Cardiac septum (tissue), 1 donor: ENCODE measurements at regions of chr22 and their contacts with region 1.

Region 1: DNA sequence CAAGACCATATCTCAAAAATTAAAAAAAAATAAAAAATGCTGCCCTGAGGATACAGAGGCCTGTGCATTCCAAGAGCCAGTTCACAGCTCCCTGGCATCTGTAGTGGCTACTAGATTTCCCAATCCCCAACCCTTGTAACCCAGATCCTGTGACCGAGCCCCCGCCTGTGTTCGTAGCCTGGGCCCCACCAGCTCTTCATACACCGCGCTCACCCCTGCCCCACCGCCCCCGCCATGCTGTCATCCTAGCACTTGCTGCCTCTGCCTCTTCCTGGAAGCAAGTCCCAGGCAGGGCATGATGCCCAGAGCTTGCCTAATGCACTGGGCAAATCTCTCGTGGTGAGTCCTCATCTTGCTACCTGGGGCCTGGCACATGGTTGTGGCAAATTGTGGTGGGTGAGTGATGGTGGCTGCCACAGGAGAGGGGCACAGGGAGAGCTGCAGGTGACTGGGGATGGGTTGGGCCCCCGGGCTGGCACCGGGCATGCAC is 7.1 kb downstream of the MGAT3 start:
- DNase-seq: peak; percentile 84

Region 2: GRCh38 chr22:39502109-39502788 is 38.3 kb after region 1 on chr22 and contains the start of gene MIEF1:
- intact Hi-C with region 1: loop called (anchors 2 kb)
- DNase-seq: peak; percentile 99
- total RNA-seq, gene MIEF1: 19.4 TPM

Region 3: GRCh38 chr22:39651053-39651996 is 187.4 kb after region 1 on chr22:
- intact Hi-C with region 1: no loop called
- DNase-seq: no peak